PC-3 (cell line): ENCODE measurements at regions of chr17 and their contacts with region 1.

Region 1: GRCh38 chr17:72421128-72422092 is 300.6 kb downstream of the SOX9 start:
- DNase-seq: peak; percentile 100
- ATAC-seq: peak; percentile 80
- H3K4me3 ChIP-seq: no peak overlapping the region
- H3K27ac ChIP-seq: peak overlapping the region; percentile 94
- H3K4me1 ChIP-seq: peaks cover 41% of the 10 kb centered on the region
- H3K27me3 ChIP-seq: no peaks in the 10 kb centered on the region
- CTCF ChIP-seq: no peak

Region 2: GRCh38 chr17:71900621-71901229 is 520.7 kb before region 1 on chr17:
- CTCF ChIA-PET with region 1: no interaction called
- POLR2A ChIA-PET with region 1: interaction called, 16 read pairs
- intact Hi-C with region 1: no loop called
- DNase-seq: peak; percentile 98
- ATAC-seq: peak; percentile 82
- H3K4me3 ChIP-seq: peak overlapping the region; percentile 20; the same call in 1 of the 2 replicates
- H3K27ac ChIP-seq: peak overlapping the region; percentile 80
- H3K4me1 ChIP-seq: peaks cover 54% of the 10 kb centered on the region
- H3K27me3 ChIP-seq: no peaks in the 10 kb centered on the region
- CTCF ChIP-seq: no peak

Region 3: DNA sequence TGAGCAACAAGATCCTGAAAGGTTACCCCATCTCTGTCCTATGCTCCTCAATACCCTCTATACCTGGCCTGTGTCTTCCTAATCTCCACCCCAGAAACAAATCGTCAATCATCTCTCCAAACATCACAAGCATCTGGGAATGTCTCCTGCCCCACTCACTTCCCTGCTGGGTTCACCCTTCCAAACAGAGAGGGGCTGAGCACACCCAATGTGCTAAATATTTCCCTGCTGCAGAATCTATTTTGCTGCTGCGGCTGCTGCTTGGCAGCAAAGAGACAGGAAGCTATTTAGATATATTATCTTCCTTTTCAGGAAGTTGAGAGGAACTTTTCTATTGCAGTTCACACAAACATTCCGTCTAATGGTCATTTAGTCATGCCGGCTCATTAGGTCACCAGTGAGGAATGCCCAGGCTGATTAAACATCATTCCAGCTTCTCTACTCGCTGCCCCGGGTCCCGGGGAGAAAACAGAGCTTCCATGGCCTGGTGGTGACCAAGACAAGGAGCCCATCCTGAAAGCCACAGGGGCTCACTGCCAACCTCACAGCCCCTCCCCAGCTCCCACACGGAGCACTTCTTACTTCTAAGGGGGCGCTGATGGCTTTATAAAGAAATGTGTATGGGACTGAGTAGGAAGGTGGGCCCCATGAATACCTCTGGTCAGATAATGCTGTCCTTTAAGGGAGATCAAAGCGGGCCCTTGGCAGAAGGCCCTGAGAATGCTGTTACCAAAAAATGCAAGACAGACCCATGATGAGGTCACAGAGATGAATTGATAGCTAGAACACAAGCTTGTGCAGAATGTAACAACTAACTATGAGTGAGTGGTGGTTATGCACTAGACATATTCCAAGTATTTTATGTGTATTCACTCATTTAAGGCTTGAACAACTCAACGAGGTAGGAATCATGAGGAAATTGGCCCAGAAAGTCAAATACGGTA is 82.3 kb before region 1 on chr17:
- CTCF ChIA-PET with region 1: no interaction called
- POLR2A ChIA-PET with region 1: no interaction called
- intact Hi-C with region 1: loop called (anchors 1 kb)
- DNase-seq: peak; percentile 97
- ATAC-seq: peak; percentile 93
- H3K4me3 ChIP-seq: peak overlapping the region; percentile 22; the same call in 1 of the 2 replicates
- H3K27ac ChIP-seq: peak overlapping the region; percentile 84
- H3K4me1 ChIP-seq: peaks cover 26% of the 10 kb centered on the region
- H3K27me3 ChIP-seq: no peaks in the 10 kb centered on the region
- CTCF ChIP-seq: no peak

Region 4: GRCh38 chr17:72407336-72407909 is 14.0 kb before region 1 on chr17:
- CTCF ChIA-PET with region 1: interaction called, 7 read pairs
- POLR2A ChIA-PET with region 1: interaction called, 7 read pairs
- intact Hi-C with region 1: loop called (anchors 1 kb)
- DNase-seq: peak; percentile 100
- ATAC-seq: peak; percentile 85
- H3K4me3 ChIP-seq: peak overlapping the region; percentile 12
- H3K27ac ChIP-seq: peak overlapping the region; percentile 96
- H3K4me1 ChIP-seq: peaks cover 56% of the 10 kb centered on the region
- H3K27me3 ChIP-seq: no peaks in the 10 kb centered on the region
- CTCF ChIP-seq: no peak

Region 5: GRCh38 chr17:72465191-72466024 is 44.0 kb after region 1 on chr17:
- CTCF ChIA-PET with region 1: interaction called, 10 read pairs
- POLR2A ChIA-PET with region 1: interaction called, 11 read pairs
- intact Hi-C with region 1: loop called (anchors 1 kb)
- DNase-seq: peak; percentile 99
- ATAC-seq: peak; percentile 89
- H3K4me3 ChIP-seq: peak overlapping the region; percentile 66
- H3K27ac ChIP-seq: peak overlapping the region; percentile 96
- H3K4me1 ChIP-seq: peaks cover 54% of the 10 kb centered on the region
- H3K27me3 ChIP-seq: no peaks in the 10 kb centered on the region
- CTCF ChIP-seq: no peak

Region 6: DNA sequence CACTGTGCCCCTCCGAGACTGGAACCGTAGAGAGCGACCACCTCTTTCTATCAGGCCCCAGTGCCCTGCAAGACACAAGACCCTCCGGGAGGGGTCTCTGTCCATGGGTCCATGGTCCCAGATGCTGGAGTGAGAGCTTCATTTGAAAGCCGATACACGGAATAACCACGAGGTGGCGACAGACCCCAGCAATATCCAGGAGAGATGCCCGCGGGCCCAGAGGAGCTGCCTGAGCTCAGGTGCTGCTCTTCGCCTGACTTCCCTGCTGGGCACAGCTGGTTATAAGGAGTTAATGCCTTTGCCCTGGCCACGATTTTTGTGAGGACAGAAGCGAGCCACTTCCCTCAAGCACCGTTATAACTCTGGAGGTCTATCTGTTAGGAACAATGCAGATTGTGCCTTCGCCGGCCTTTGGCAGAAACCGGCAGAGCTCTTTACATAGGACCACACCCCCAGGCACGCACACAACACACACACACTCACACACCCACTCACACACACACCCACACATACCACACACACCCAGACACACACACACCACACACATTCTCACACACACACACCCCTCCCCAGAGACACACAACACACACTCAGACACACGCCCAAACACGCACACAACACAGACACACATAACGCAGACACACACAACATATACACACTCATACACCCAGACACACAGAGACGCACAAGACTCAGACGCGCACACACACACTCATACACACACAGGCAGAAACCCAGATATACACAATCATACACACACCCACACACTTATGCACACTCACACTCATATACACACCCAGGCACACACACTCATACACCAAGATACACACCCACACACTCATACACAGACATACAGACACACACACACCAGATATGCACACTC is 135.8 kb after region 1 on chr17:
- CTCF ChIA-PET with region 1: no interaction called
- POLR2A ChIA-PET with region 1: no interaction called
- intact Hi-C with region 1: no loop called
- DNase-seq: peak; percentile 89
- ATAC-seq: peak; percentile 48
- H3K4me3 ChIP-seq: no peak overlapping the region
- H3K27ac ChIP-seq: no peak overlapping the region
- H3K4me1 ChIP-seq: peaks cover 20% of the 10 kb centered on the region
- H3K27me3 ChIP-seq: no peaks in the 10 kb centered on the region
- CTCF ChIP-seq: peak; percentile 98

Region 7: GRCh38 chr17:72715906-72716572 is 294.6 kb after region 1 on chr17:
- CTCF ChIA-PET with region 1: no interaction called
- POLR2A ChIA-PET with region 1: no interaction called
- intact Hi-C with region 1: loop called (anchors 10 kb)
- DNase-seq: peak; percentile 99
- ATAC-seq: peak; percentile 95
- H3K4me3 ChIP-seq: no peak overlapping the region
- H3K27ac ChIP-seq: peak overlapping the region; percentile 95
- H3K4me1 ChIP-seq: peaks cover 36% of the 10 kb centered on the region
- H3K27me3 ChIP-seq: no peaks in the 10 kb centered on the region
- CTCF ChIP-seq: no peak